Transverse colon (tissue), 4 donors: ENCODE measurements at regions of chr6 and their contacts with region 1.

Region 1: GRCh38 chr6:93366506-93366905 is 52.9 kb downstream of the EPHA7 start:
- DNase-seq: no peak
- H3K4me3 ChIP-seq: no peak overlapping the region
- H3K27ac ChIP-seq: no peak overlapping the region
- H3K4me1 ChIP-seq: no peaks in the 10 kb centered on the region
- H3K27me3 ChIP-seq: no peaks in the 10 kb centered on the region
- CTCF ChIP-seq: no peak
- EP300 ChIP-seq: no peak
- POLR2A ChIP-seq: no peak

Region 2: DNA sequence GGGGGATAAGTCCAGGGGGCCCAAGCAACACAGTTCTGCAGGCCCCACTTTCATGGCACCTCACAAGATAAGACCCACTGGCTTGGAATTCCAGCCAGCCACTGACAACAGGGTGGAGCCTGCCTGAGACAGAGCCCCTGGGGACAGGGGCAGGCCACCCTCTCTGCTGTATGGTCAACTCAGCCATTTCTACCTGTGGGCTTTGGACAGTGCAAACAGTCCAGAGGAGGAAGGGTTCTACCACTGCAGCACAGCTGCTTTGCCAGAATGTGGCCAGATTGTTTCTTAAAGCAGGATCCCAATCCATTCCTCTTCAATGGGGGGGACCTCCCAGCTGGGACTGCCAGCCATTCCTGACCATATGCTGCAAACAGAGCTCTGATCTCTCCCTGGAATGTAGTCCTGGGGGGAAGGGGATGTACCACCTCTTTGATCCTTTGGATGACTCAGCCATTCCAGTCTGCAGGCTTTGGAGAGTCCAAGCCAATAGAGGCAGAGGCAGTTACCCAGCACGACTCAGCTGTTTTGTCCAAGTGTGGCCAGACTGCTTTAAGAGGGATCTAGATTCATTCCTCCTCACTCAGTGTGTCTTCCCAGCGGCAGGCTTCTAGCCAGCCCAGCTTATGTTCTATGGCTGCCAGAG is 789.3 kb before region 1 on chr6:
- in situ Hi-C with region 1: no loop called
- intact Hi-C with region 1: loop called (anchors 10 kb)
- DNase-seq: no peak
- H3K4me3 ChIP-seq: no peak overlapping the region
- H3K27ac ChIP-seq: no peak overlapping the region
- H3K4me1 ChIP-seq: no peaks in the 10 kb centered on the region
- H3K27me3 ChIP-seq: no peaks in the 10 kb centered on the region
- CTCF ChIP-seq: no peak
- EP300 ChIP-seq: no peak
- POLR2A ChIP-seq: no peak

Region 3: GRCh38 chr6:93248631-93249030 is 117.9 kb before region 1 on chr6:
- in situ Hi-C with region 1: no loop called
- intact Hi-C with region 1: no loop called
- DNase-seq: no peak
- H3K4me3 ChIP-seq: no peak overlapping the region
- H3K27ac ChIP-seq: no peak overlapping the region
- H3K4me1 ChIP-seq: no peaks in the 10 kb centered on the region
- H3K27me3 ChIP-seq: no peaks in the 10 kb centered on the region
- CTCF ChIP-seq: no peak
- EP300 ChIP-seq: no peak
- POLR2A ChIP-seq: no peak

Region 4: DNA sequence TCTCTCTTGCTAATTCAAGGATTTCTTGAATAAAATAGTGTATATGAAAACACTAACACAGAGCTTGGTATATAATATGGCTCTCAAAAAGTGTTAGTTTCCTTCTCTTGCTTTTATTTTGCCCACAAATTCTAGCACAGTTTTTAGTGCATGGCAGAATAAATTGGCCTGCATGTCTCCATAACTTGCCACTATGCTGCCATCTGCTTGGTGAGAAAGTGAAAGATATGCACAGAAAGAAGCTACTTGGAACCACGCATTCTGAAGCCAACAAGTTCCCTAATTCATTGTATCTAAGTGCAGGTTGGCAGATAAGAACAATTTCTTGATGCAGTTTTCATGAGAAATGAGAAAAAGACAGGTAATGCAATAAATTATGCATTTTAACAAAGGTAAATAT is 48.4 kb before region 1 on chr6:
- in situ Hi-C with region 1: no loop called
- intact Hi-C with region 1: no loop called
- DNase-seq: no peak
- H3K4me3 ChIP-seq: no peak overlapping the region
- H3K27ac ChIP-seq: no peak overlapping the region
- H3K4me1 ChIP-seq: no peaks in the 10 kb centered on the region
- H3K27me3 ChIP-seq: no peaks in the 10 kb centered on the region
- CTCF ChIP-seq: no peak
- EP300 ChIP-seq: no peak
- POLR2A ChIP-seq: no peak